Ovary (tissue), 10 donors: ENCODE measurements at regions of chr9 and their contacts with region 1.

Region 1: GRCh38 chr9:316382-316965 is 101.8 kb downstream of the DOCK8 start:
- DNase-seq: no peak
- H3K4me3 ChIP-seq: no peak overlapping the region
- H3K27ac ChIP-seq: no peak overlapping the region
- H3K4me1 ChIP-seq: no peaks in the 10 kb centered on the region
- H3K27me3 ChIP-seq: no peaks in the 10 kb centered on the region
- CTCF ChIP-seq: no peak
- EP300 ChIP-seq: no peak
- POLR2A ChIP-seq: no peak

Region 2: GRCh38 chr9:209143-209758 is 107.2 kb before region 1 on chr9:
- intact Hi-C with region 1: no loop called
- DNase-seq: no peak
- H3K4me3 ChIP-seq: no peak overlapping the region
- H3K27ac ChIP-seq: no peak overlapping the region
- H3K4me1 ChIP-seq: no peaks in the 10 kb centered on the region
- H3K27me3 ChIP-seq: no peaks in the 10 kb centered on the region
- CTCF ChIP-seq: no peak
- EP300 ChIP-seq: no peak
- POLR2A ChIP-seq: no peak

Region 3: GRCh38 chr9:304519-305190 is 11.8 kb before region 1 on chr9:
- intact Hi-C with region 1: no loop called
- DNase-seq: no peak
- H3K4me3 ChIP-seq: no peak overlapping the region
- H3K27ac ChIP-seq: no peak overlapping the region
- H3K4me1 ChIP-seq: no peaks in the 10 kb centered on the region
- H3K27me3 ChIP-seq: no peaks in the 10 kb centered on the region
- CTCF ChIP-seq: no peak
- EP300 ChIP-seq: no peak
- POLR2A ChIP-seq: no peak

Region 4: GRCh38 chr9:354453-354852 is 38.0 kb after region 1 on chr9:
- intact Hi-C with region 1: loop called in 1 of 4 experiments (anchors 5 kb)
- DNase-seq: no peak
- H3K4me3 ChIP-seq: no peak overlapping the region
- H3K27ac ChIP-seq: no peak overlapping the region
- H3K4me1 ChIP-seq: no peaks in the 10 kb centered on the region
- H3K27me3 ChIP-seq: no peaks in the 10 kb centered on the region
- CTCF ChIP-seq: no peak
- EP300 ChIP-seq: no peak
- POLR2A ChIP-seq: no peak

Region 5: DNA sequence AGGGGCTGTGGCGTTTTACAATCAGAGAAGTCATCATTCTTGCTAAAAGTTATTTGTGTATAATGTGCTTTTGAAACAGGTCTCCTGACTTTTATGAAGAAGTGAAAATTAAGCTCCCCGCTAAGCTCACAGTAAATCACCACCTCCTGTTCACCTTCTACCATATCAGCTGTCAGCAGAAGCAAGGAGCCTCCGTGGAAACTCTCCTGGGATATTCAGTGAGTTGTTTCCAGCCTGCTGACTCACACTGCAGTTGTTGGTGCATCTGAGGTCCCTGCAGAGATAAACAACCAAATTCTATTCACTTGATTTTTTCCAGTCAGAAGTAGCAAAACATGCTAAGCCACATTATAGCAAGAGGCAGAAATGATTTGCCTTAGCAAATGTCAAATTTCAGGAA is 54.9 kb after region 1 on chr9:
- intact Hi-C with region 1: loop called in 1 of 4 experiments (anchors 10 kb)
- DNase-seq: no peak
- H3K4me3 ChIP-seq: no peak overlapping the region
- H3K27ac ChIP-seq: no peak overlapping the region
- H3K4me1 ChIP-seq: no peaks in the 10 kb centered on the region
- H3K27me3 ChIP-seq: no peaks in the 10 kb centered on the region
- CTCF ChIP-seq: no peak
- EP300 ChIP-seq: no peak
- POLR2A ChIP-seq: no peak